GM10248 (cell line): ENCODE measurements at regions of chr7 and their contacts with region 1.

Region 1: DNA sequence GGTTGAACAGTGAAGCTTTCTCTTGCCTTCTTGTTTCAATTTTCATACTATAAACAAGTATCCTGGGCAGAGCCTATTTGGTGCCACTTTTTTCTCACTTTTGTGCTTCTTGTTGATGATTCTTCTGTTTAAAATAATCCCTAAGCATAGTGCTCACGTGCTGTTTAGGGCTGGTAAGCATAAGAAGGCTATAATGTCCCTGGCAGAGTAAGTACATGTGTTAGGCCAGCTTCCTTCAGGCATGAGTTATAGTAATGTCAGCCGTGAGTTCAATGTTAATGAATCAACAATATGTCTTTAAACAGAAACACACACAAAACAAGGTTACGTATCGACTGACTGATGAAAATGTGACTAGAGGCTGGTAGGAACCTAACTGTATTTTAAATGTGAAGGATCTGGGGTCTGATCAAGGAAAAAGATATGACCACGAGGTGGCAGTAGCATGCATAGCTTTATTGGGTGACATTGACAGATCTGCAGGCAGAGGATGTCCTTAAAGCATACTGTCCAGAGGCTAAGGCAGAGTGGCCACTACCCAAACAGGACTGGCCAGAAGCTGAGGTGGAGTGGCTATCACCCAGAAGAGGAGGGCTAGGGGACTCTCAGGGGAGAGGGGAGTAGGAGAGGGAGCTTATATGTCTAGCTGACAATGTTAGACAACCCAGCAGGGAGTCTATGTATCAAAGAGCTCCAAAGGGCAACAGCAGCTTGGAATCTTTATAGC is 113.7 kb downstream of the BRAF start:
- DNase-seq: peak; percentile 43
- CTCF ChIP-seq: peak; percentile 74

Region 2: DNA sequence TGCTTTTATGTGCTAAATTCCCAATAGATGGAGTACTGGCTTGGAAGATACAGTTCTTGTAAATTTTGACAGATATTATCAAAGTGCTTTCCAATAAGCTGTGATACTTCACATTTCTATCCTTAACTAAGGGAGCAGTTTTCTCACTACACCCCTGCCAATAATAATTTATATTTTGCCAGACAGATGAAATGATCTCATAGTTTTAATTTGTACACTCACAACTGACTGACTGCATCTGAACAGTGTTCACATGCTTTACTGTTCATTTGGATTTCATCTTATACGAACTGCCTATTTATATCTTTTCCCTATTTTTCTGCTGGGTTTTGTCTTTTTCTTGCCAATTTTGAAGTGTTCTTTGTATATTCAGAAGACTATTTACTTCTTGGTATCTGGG is 17.7 kb after region 1 on chr7:
- CTCF ChIA-PET with region 1: interaction called, 21 read pairs
- POLR2A ChIA-PET with region 1: no interaction called
- DNase-seq: no peak
- CTCF ChIP-seq: no peak

Region 3: GRCh38 chr7:140873434-140873833 is 62.4 kb after region 1 on chr7:
- CTCF ChIA-PET with region 1: interaction called, 12 read pairs
- POLR2A ChIA-PET with region 1: no interaction called
- DNase-seq: no peak
- CTCF ChIP-seq: no peak

Region 4: GRCh38 chr7:140983802-140984201 is 172.8 kb after region 1 on chr7:
- CTCF ChIA-PET with region 1: interaction called, 13 read pairs
- POLR2A ChIA-PET with region 1: no interaction called
- DNase-seq: no peak
- CTCF ChIP-seq: no peak

Region 5: GRCh38 chr7:141003172-141004065 is 192.4 kb after region 1 on chr7:
- CTCF ChIA-PET with region 1: interaction called, 118 read pairs
- POLR2A ChIA-PET with region 1: no interaction called
- DNase-seq: no peak
- CTCF ChIP-seq: no peak

Region 6: GRCh38 chr7:141354251-141354650 is 543.3 kb after region 1 on chr7:
- CTCF ChIA-PET with region 1: no interaction called
- POLR2A ChIA-PET with region 1: no interaction called
- DNase-seq: no peak
- CTCF ChIP-seq: no peak

Region 7: GRCh38 chr7:141533149-141533949 is 722.4 kb after region 1 on chr7:
- CTCF ChIA-PET with region 1: interaction called, 13 read pairs
- POLR2A ChIA-PET with region 1: no interaction called
- DNase-seq: peak; percentile 69
- CTCF ChIP-seq: peak; percentile 98